Caco-2 (cell line): ENCODE measurements at regions of chr22 and their contacts with region 1.

Region 1: DNA sequence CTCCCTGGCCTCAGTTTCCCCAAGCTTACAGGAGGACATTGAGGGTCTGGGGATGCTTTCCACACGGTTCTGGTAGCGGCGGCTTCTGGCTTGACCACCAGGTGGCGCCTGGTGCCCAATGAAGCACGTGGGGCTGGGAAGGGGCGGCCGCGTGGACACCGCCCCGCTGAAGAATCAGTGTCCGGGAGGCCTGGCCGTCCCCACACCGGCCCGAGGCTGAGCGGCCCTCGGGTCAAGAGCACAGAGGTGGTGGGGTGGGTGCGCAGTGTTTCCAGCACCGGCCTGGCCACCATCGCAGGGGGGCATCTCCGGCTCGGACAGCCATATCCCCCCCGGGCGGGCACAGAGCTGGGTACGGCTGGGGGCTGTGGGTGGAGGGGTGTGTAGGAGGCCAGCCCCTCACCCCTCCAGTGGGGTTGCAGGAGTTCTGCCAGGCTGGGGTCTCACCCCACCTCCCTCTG is 27.8 kb upstream of the PPARA start:
- DNase-seq: peak; percentile 75 to 83
- H3K4me3 ChIP-seq: no peak overlapping the region
- H3K4me3 Mint-ChIP-seq: no peak overlapping the region
- H3K27ac Mint-ChIP-seq: no peak overlapping the region
- H3K4me1 ChIP-seq: peaks cover 5% of the 10 kb centered on the region
- H3K4me1 Mint-ChIP-seq: no peaks in the 10 kb centered on the region
- H3K27me3 ChIP-seq: no peaks in the 10 kb centered on the region
- H3K27me3 Mint-ChIP-seq: no peaks in the 10 kb centered on the region
- CTCF ChIP-seq: peak; percentile 93 to 94

Region 2: GRCh38 chr22:46250035-46250782 is 127.7 kb after region 1 on chr22 and contains the start of gene CDPF1:
- CTCF ChIA-PET with region 1: interaction called, 3 read pairs
- POLR2A ChIA-PET with region 1: no interaction called
- intact Hi-C with region 1: loop called (anchors 1 kb)
- DNase-seq: peak; percentile 88 to 95
- H3K4me3 ChIP-seq: peak within 1 kb of the TSS; percentile 78
- H3K4me3 Mint-ChIP-seq: peak within 1 kb of the TSS; percentile 93
- H3K27ac Mint-ChIP-seq: peak within 1 kb of the TSS; percentile 90
- H3K4me1 ChIP-seq: peaks cover 12% of the 10 kb centered on the region
- H3K4me1 Mint-ChIP-seq: peaks cover 7% of the 10 kb centered on the region
- H3K27me3 ChIP-seq: no peaks in the 10 kb centered on the region
- H3K27me3 Mint-ChIP-seq: no peaks in the 10 kb centered on the region
- CTCF ChIP-seq: no peak
- total RNA-seq, gene CDPF1: 7.2 and 8.8 TPM in 2 replicates

Region 3: GRCh38 chr22:46267431-46268279 is 145.1 kb after region 1 on chr22 and contains the start of gene TTC38:
- CTCF ChIA-PET with region 1: no interaction called
- POLR2A ChIA-PET with region 1: no interaction called
- intact Hi-C with region 1: loop called (anchors 1 kb)
- DNase-seq: peak; percentile 89 to 90
- H3K4me3 ChIP-seq: peak within 1 kb of the TSS; percentile 80
- H3K4me3 Mint-ChIP-seq: peak within 1 kb of the TSS; percentile 90
- H3K27ac Mint-ChIP-seq: peak within 1 kb of the TSS; percentile 75
- H3K4me1 ChIP-seq: peaks cover 16% of the 10 kb centered on the region
- H3K4me1 Mint-ChIP-seq: no peaks in the 10 kb centered on the region
- H3K27me3 ChIP-seq: no peaks in the 10 kb centered on the region
- H3K27me3 Mint-ChIP-seq: no peaks in the 10 kb centered on the region
- CTCF ChIP-seq: no peak
- total RNA-seq, gene TTC38: 44.5 and 48.9 TPM in 2 replicates

Region 4: DNA sequence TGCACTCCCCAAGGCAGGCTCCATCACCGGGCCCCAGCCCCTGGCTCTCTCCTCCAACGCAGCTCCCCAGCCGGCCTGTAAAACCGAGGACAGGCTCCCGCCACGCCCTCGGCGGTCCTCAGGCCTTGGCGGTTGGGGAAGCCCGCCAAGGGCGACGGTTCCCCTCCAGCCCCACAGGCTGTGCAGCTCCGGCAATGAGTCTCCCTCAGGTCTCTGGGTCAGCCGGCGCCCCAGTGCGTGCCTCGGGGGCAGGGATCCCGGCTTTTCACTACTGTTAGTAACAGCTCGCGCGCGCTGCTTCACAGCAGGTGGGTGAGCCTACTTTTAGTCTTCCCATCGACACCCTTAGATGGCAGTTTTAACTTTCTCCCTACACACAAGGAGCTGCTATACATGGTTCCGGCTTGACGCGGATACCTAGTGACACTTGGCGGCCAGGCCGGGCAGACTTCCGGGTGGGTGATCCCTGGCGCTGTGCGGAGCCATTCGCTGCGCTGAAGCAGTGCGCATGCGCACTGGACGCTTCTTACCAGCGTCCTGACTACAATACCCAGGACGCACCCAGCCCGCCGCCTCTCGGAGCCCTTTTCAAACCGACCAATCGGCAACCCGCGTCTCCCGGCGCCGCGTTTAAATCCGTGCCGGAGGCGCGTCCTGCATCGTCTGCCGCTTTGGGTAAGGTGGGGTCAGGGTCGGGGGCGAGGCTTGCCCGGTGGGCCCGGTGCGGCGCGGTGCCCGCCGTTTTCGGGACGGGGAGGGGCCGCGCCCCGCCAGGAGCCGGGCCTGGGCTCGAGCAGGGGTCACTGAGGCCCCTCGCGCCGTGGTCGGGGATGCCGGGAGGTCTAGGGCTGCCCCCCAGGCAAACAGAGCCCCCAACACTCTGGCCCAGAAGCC is 174.0 kb after region 1 on chr22 and contains the start of gene GTSE1:
- CTCF ChIA-PET with region 1: interaction called, 10 read pairs
- POLR2A ChIA-PET with region 1: interaction called, 3 read pairs
- intact Hi-C with region 1: loop called (anchors 1 kb)
- DNase-seq: peak; percentile 95 to 97
- H3K4me3 ChIP-seq: peak within 1 kb of the TSS; percentile 69
- H3K4me3 Mint-ChIP-seq: peak within 1 kb of the TSS; percentile 84
- H3K27ac Mint-ChIP-seq: peak within 1 kb of the TSS; percentile 87
- H3K4me1 ChIP-seq: peaks cover 8% of the 10 kb centered on the region; the same call in 1 of the 2 replicates
- H3K4me1 Mint-ChIP-seq: peaks cover 30% of the 10 kb centered on the region
- H3K27me3 ChIP-seq: no peaks in the 10 kb centered on the region
- H3K27me3 Mint-ChIP-seq: no peaks in the 10 kb centered on the region
- CTCF ChIP-seq: peak in 1 of 2 experiments; percentile 25
- total RNA-seq, gene GTSE1: 54.4 and 55.1 TPM in 2 replicates

Region 5: DNA sequence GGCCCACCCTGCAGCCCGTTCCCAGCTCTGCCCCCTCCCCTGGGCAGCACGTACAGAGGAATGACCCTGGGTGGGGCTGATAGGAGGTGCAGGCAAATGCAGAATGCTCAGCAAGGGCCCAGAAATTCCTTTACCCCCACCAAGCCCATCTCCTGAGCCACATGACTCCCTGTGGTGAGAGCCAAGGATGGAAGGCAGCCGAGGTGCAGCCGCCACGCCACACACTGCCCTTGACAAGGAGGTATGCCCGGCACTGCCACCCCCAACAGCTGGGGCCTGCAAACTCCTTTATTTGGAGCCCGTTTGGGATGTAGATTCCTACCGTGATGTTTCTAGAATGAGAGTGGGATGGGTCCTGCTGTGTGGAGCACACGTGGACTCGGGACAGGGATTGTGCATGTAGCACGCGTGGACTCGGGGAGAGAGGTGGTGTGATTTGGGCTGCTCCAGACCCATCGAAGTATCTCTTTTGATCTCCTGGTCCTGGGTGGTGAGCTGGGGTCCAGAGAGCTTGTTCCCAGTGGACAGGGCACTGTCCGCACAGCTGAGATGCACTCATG is 187.1 kb after region 1 on chr22:
- CTCF ChIA-PET with region 1: interaction called, 3 read pairs
- POLR2A ChIA-PET with region 1: no interaction called
- intact Hi-C with region 1: loop called (anchors 1 kb)
- DNase-seq: no peak
- H3K4me3 ChIP-seq: no peak overlapping the region
- H3K4me3 Mint-ChIP-seq: no peak overlapping the region
- H3K27ac Mint-ChIP-seq: no peak overlapping the region
- H3K4me1 ChIP-seq: no peaks in the 10 kb centered on the region
- H3K4me1 Mint-ChIP-seq: no peaks in the 10 kb centered on the region
- H3K27me3 ChIP-seq: no peaks in the 10 kb centered on the region
- H3K27me3 Mint-ChIP-seq: no peaks in the 10 kb centered on the region
- CTCF ChIP-seq: no peak